ENCODE measurements at regions of chr16 and their contacts with region 1.

Region 1: GRCh38 chr16:88785106-88785924 is at the start of gene PIEZO1:
- DNase-seq: peak; percentile 81 to 91 (median 82)
- H3K4me3 ChIP-seq: peak within 1 kb of the TSS; percentile 15
- H3K4me3 Mint-ChIP-seq: peak within 1 kb of the TSS; percentile 80 to 96 (median 85)
- H3K27ac ChIP-seq: peak within 1 kb of the TSS; percentile 80
- H3K27ac Mint-ChIP-seq: peak within 1 kb of the TSS in 6 of 8 donors; percentile 47 to 92 (median 82)
- H3K4me1 ChIP-seq: peaks cover 53% of the 10 kb centered on the region
- H3K4me1 Mint-ChIP-seq: peaks cover 42 to 49% (median 45%) of the 10 kb centered on the region in 3 donors
- H3K27me3 ChIP-seq: no peaks in the 10 kb centered on the region
- H3K27me3 Mint-ChIP-seq: no peaks in the 10 kb centered on the region
- total RNA-seq, gene PIEZO1: 215 to 230 TPM

Region 2: GRCh38 chr16:88743693-88744576 is 41.4 kb before region 1 on chr16:
- CTCF ChIA-PET with region 1: interaction called, 3 read pairs
- POLR2A ChIA-PET with region 1: interaction called, 13 read pairs
- DNase-seq: peak; percentile 59 to 83 (median 70)
- H3K4me3 ChIP-seq: no peak overlapping the region
- H3K4me3 Mint-ChIP-seq: peak overlapping the region in 3 of 7 donors; percentile 14 to 39 (median 38)
- H3K27ac ChIP-seq: no peak overlapping the region
- H3K27ac Mint-ChIP-seq: peak overlapping the region in 3 of 8 donors; percentile 22 to 69 (median 23)
- H3K4me1 ChIP-seq: peaks cover 30% of the 10 kb centered on the region
- H3K4me1 Mint-ChIP-seq: peaks cover 20 to 32% (median 20%) of the 10 kb centered on the region in 3 donors
- H3K27me3 ChIP-seq: no peaks in the 10 kb centered on the region
- H3K27me3 Mint-ChIP-seq: no peaks in the 10 kb centered on the region

Region 3: GRCh38 chr16:88768080-88768752 is 17.1 kb before region 1 on chr16:
- CTCF ChIA-PET with region 1: interaction called, 18 read pairs
- POLR2A ChIA-PET with region 1: interaction called, 12 read pairs
- DNase-seq: no peak
- H3K4me3 ChIP-seq: no peak overlapping the region
- H3K4me3 Mint-ChIP-seq: no peak overlapping the region
- H3K27ac ChIP-seq: peak overlapping the region; percentile 51
- H3K27ac Mint-ChIP-seq: peak overlapping the region in 1 of 8 donors; percentile 27
- H3K4me1 ChIP-seq: peaks cover 41% of the 10 kb centered on the region
- H3K4me1 Mint-ChIP-seq: peaks cover 28 to 63% (median 30%) of the 10 kb centered on the region in 3 donors
- H3K27me3 ChIP-seq: no peaks in the 10 kb centered on the region
- H3K27me3 Mint-ChIP-seq: no peaks in the 10 kb centered on the region

Region 4: GRCh38 chr16:88811769-88812512 is 26.6 kb after region 1 on chr16 and contains the start of gene APRT:
- CTCF ChIA-PET with region 1: interaction called, 10 read pairs
- POLR2A ChIA-PET with region 1: interaction called, 19 read pairs
- DNase-seq: peak; percentile 94 to 98 (median 96)
- H3K4me3 ChIP-seq: peak within 1 kb of the TSS; percentile 74
- H3K4me3 Mint-ChIP-seq: peak within 1 kb of the TSS; percentile 84 to 99 (median 96)
- H3K27ac ChIP-seq: peak within 1 kb of the TSS; percentile 78
- H3K27ac Mint-ChIP-seq: peak within 1 kb of the TSS; percentile 72 to 98 (median 95)
- H3K4me1 ChIP-seq: peaks cover 14% of the 10 kb centered on the region
- H3K4me1 Mint-ChIP-seq: peaks cover 8 to 35% (median 17%) of the 10 kb centered on the region in 3 donors
- H3K27me3 ChIP-seq: no peaks in the 10 kb centered on the region
- H3K27me3 Mint-ChIP-seq: peaks cover 0 to 4% of the 10 kb centered on the region in 2 donors
- total RNA-seq, gene APRT: 338 to 348 TPM

Region 5: GRCh38 chr16:88856828-88857733 is 71.8 kb after region 1 on chr16 and contains the starts of genes GALNS and TRAPPC2L:
- CTCF ChIA-PET with region 1: interaction called, 19 read pairs
- POLR2A ChIA-PET with region 1: interaction called, 6 read pairs
- DNase-seq: peak; percentile 97 to 100 (median 98)
- H3K4me3 ChIP-seq: peak within 1 kb of the TSS; percentile 97
- H3K4me3 Mint-ChIP-seq: peak within 1 kb of the TSS; percentile 93 to 100 (median 98)
- H3K27ac ChIP-seq: peak within 1 kb of the TSS; percentile 89
- H3K27ac Mint-ChIP-seq: peak within 1 kb of the TSS; percentile 81 to 100 (median 98)
- H3K4me1 ChIP-seq: peaks cover 33% of the 10 kb centered on the region
- H3K4me1 Mint-ChIP-seq: peaks cover 24 to 48% (median 38%) of the 10 kb centered on the region in 3 donors
- H3K27me3 ChIP-seq: no peaks in the 10 kb centered on the region
- H3K27me3 Mint-ChIP-seq: peaks cover 0 to 2% of the 10 kb centered on the region in 2 donors
- total RNA-seq, gene GALNS: 19.2 to 22.5 TPM
- total RNA-seq, gene TRAPPC2L: 90.0 to 104 TPM

Region 6: GRCh38 chr16:88870608-88871348 is 85.5 kb after region 1 on chr16:
- CTCF ChIA-PET with region 1: no interaction called
- POLR2A ChIA-PET with region 1: no interaction called
- DNase-seq: no peak
- H3K4me3 ChIP-seq: no peak overlapping the region
- H3K4me3 Mint-ChIP-seq: no peak overlapping the region
- H3K27ac ChIP-seq: peak overlapping the region; percentile 4
- H3K27ac Mint-ChIP-seq: no peak overlapping the region
- H3K4me1 ChIP-seq: no peaks in the 10 kb centered on the region
- H3K4me1 Mint-ChIP-seq: peaks cover 0 to 3% (median 0%) of the 10 kb centered on the region in 3 donors
- H3K27me3 ChIP-seq: peaks cover 6% of the 10 kb centered on the region
- H3K27me3 Mint-ChIP-seq: peaks cover 2 to 20% of the 10 kb centered on the region in 2 donors

Region 7: DNA sequence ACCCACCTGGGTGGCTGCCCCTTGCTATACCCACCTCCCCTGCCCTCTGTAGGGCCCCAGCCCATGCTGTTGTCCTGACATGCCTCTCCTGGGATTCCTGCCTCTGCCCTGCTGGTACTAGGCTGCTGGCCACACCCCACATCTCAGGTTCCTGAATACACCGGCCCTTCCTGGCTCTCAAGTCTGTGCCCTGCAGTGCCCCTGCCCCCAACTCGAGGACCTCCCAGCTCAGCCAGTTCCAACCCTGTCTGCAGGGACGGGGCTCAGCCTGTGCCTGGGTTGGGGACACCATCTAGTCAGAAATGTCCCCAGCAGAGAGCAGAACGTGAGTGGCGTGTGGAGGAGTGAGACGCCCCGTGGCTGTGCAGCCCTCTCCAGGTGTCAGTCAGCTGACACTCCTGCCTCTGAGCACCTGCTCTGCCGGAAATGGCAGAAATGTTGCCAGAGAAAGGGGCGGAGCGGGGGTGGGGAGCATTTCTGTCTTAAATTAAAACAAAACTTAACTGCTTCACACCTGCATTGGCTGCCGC is 337.1 kb after region 1 on chr16:
- CTCF ChIA-PET with region 1: no interaction called
- POLR2A ChIA-PET with region 1: no interaction called
- DNase-seq: peak; percentile 26 to 83 (median 59)
- H3K4me3 ChIP-seq: peak overlapping the region; percentile 31
- H3K4me3 Mint-ChIP-seq: peak overlapping the region in 2 of 7 donors; percentile 48 to 82
- H3K27ac ChIP-seq: no peak overlapping the region
- H3K27ac Mint-ChIP-seq: peak overlapping the region in 7 of 8 donors; percentile 43 to 86 (median 82)
- H3K4me1 ChIP-seq: peaks cover 26% of the 10 kb centered on the region
- H3K4me1 Mint-ChIP-seq: peaks cover 12 to 18% (median 16%) of the 10 kb centered on the region in 3 donors
- H3K27me3 ChIP-seq: no peaks in the 10 kb centered on the region
- H3K27me3 Mint-ChIP-seq: no peaks in the 10 kb centered on the region